OCI-LY7 (cell line): ENCODE measurements at regions of chr11 and their contacts with region 1.

Region 1: GRCh38 chr11:34585735-34586487 is 35.0 kb upstream of the EHF start:
- DNase-seq: peak; percentile 33
- H3K4me3 ChIP-seq: no peak overlapping the region
- H3K27ac ChIP-seq: no peak overlapping the region
- H3K4me1 ChIP-seq: peaks cover 7% of the 10 kb centered on the region
- CTCF ChIP-seq: peak; percentile 84

Region 2: DNA sequence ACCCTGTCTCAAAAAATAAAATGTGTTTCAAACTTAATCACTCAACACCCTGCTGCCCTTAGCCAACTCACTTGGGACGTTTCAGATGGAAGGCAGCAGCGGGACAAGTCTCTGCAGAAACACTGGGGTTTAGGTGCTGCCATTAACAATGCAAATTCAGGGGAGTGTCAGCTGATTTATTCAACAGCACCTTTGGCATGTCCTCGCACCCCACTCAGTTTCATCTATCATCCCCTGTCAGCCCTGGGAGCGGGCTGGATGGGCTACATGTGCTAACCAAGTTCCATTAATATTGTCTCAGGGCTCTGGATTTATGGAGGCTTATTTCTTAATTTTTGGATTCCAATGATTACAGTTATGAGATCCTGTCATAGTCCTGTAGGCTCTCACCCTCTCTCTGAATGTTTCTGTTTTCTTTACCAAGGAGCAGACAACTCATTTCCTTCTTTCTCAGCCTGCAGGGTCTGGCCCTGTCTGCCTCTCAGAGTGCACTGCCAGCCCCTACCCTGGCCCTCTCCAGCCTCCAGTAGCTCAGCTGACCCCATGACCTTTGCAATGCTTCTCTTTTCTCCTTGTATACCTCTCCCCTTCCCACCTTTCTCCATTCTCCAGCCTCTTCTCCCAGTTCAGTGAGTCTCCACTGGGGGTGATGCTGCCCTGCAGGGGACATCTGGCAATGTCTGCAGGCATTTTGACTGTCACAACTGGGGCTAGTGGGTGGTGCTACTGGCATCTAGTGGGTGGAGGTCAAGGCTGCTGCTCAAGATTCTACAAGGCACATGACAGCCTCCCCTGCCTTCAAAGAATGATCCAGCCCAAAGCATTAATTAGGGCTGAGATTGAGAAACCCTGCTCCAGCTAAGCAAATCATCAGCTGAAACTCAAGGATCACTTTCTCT is 251.3 kb after region 1 on chr11:
- CTCF ChIA-PET with region 1: no interaction called
- POLR2A ChIA-PET with region 1: no interaction called
- intact Hi-C with region 1: loop called (anchors 10 kb)
- DNase-seq: no peak
- H3K4me3 ChIP-seq: no peak overlapping the region
- H3K27ac ChIP-seq: no peak overlapping the region
- H3K4me1 ChIP-seq: no peaks in the 10 kb centered on the region
- CTCF ChIP-seq: 0 out of 2 replicates have a peak, but pooled peaks have one; percentile 13

Region 3: DNA sequence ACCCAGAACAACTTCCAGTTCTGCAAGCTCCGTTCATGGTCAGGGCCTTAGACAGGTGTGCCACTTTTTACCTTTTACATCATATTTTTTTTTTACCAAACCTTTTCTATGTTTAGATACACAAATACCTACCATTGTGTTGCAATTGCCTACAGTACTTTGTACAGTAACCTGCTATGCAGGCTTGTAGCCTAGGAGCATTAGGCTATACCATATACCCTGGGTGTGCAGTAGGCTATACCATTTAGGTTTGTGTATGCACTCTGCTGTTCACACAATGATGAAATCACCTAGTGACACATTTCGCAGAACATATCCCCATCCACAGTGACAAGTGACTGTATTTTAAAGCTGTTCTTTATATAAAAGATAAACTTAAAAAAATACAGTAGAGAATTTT is 300.7 kb after region 1 on chr11:
- CTCF ChIA-PET with region 1: no interaction called
- POLR2A ChIA-PET with region 1: no interaction called
- intact Hi-C with region 1: loop called (anchors 10 kb)
- DNase-seq: no peak
- H3K4me3 ChIP-seq: no peak overlapping the region
- H3K27ac ChIP-seq: no peak overlapping the region
- H3K4me1 ChIP-seq: no peaks in the 10 kb centered on the region
- CTCF ChIP-seq: no peak

Region 4: GRCh38 chr11:35412285-35412684 is 826.4 kb after region 1 on chr11:
- CTCF ChIA-PET with region 1: no interaction called
- POLR2A ChIA-PET with region 1: no interaction called
- intact Hi-C with region 1: loop called (anchors 5 kb)
- DNase-seq: no peak
- H3K4me3 ChIP-seq: no peak overlapping the region
- H3K27ac ChIP-seq: no peak overlapping the region
- H3K4me1 ChIP-seq: no peaks in the 10 kb centered on the region
- CTCF ChIP-seq: peak; percentile 70